GM12878 (cell line): ENCODE measurements at regions of chr7 and their contacts with region 1.

Region 1: DNA sequence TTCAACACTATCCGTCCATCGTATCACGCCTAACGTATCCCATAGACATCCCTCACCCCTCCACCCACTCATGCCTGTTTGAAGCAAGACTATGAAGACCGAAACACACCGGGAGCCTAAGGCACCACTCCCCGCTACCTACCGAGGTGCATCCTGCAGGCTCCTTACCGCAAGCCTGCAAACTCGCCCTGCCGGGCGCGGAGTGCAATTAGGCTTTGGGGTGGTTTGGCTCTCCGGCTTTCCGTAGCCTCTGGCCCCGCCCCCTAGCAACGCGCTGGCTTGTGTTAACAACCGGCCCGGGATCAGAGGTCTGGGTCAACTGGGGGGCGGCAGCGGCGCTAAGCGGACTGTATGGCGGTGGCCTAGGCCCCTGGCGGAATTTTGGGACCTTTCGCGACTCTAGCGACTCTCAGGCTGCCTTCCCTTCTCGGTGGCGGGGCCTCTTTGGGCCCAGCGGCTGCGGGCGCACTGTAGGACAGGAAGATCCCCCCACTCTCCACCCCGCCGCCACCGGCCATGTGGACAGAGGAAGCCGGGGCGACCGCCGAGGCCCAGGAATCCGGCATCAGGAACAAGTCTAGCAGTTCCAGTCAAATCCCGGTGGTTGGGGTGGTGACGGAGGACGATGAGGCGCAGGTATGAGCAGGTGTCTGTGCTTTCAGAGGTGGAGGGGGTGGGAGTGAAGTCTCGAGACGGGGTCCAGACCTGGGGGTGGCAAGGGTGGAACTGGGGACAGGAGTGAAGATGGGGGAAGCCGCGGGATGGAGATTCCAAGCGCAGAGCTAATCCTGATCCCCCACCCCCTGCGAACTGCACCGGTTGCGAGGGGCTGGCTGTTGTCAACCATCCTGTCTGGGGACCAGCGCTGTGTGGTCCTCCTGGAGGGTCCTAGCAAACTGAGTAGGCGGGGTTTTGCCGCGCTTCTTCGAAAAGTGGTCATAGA is at the start of gene CFAP69:
- DNase-seq: peak; percentile 46
- ATAC-seq: peak; percentile 69
- H3K4me3 ChIP-seq: peak within 1 kb of the TSS; percentile 66
- H3K27ac ChIP-seq: no peak within 1 kb of the TSS
- H3K4me1 ChIP-seq: peaks cover 5% of the 10 kb centered on the region; the same call in 1 of the 2 replicates
- H3K27me3 ChIP-seq: peaks cover 0 to 6% of the 10 kb centered on the region in 2 experiments; a peak in 1 of 4 replicates
- CTCF ChIP-seq: peak in 2 of 3 experiments; percentile 7 to 30; a peak in 1 of 6 replicates
- EP300 ChIP-seq: peak in 1 of 2 experiments; percentile 62; a peak in 2 of 4 replicates
- POLR2A ChIP-seq: peak; percentile 31; the same call in 1 of the 2 replicates
- RAD21 ChIP-seq: no peak
- polyA plus RNA-seq, gene CFAP69: 0.11 TPM in 1 of 2 experiments, not detected in the other

Region 2: DNA sequence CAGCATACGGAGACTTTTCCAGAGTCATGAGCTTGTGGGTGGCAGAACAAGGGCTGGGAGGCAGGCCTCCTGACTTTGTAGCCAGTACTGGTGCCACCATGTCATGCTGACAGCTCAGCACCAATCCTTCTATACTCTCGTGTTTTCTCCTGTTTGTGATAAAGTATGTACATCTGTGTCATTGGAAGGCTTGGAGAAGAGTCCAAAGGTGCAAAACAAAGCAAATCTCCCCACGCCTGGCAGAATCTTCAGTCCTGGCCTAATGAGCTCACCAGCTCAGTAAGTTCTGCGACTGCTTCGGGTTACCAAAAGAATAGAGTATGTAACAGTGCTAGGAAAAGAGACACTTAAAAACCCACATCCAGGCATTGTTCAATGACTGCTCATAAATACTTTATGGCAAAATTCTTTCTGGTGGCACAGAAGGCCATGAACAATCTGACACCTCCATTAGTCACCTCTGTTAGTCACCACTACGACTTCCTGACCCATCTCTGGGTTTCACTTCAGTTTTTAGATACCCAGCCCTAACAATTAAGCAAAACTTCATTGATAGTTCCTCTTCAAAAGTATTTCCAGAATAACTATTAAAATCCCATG is 66.4 kb before region 1 on chr7:
- CTCF ChIA-PET with region 1: interaction called, 9 read pairs
- POLR2A ChIA-PET with region 1: interaction called, 17 read pairs
- RAD21 ChIA-PET with region 1: interaction called, 10 read pairs
- SMC1A ChIA-PET with region 1: interaction called, 33 read pairs
- in situ Hi-C with region 1: loop called (anchors 5 kb)
- intact Hi-C with region 1: loop called (anchors 2 kb)
- DNase-seq: peak; percentile 65
- ATAC-seq: peak; percentile 95
- H3K4me3 ChIP-seq: no peak overlapping the region
- H3K27ac ChIP-seq: peak overlapping the region; percentile 19
- H3K4me1 ChIP-seq: peaks cover 23% of the 10 kb centered on the region
- H3K27me3 ChIP-seq: no peaks in the 10 kb centered on the region
- CTCF ChIP-seq: no peak
- EP300 ChIP-seq: peak in 1 of 2 experiments; percentile 80; a peak in 1 of 4 replicates
- POLR2A ChIP-seq: no peak
- RAD21 ChIP-seq: no peak

Region 3: GRCh38 chr7:90222811-90223725 is 22.1 kb before region 1 on chr7:
- CTCF ChIA-PET with region 1: interaction called, 24 read pairs
- POLR2A ChIA-PET with region 1: interaction called, 32 read pairs
- RAD21 ChIA-PET with region 1: interaction called, 38 read pairs
- SMC1A ChIA-PET with region 1: interaction called, 51 read pairs
- in situ Hi-C with region 1: no loop called
- intact Hi-C with region 1: no loop called
- DNase-seq: no peak
- ATAC-seq: peak; percentile 75
- H3K4me3 ChIP-seq: no peak overlapping the region
- H3K27ac ChIP-seq: no peak overlapping the region
- H3K4me1 ChIP-seq: no peaks in the 10 kb centered on the region
- H3K27me3 ChIP-seq: no peaks in the 10 kb centered on the region
- CTCF ChIP-seq: no peak
- EP300 ChIP-seq: no peak
- POLR2A ChIP-seq: no peak
- RAD21 ChIP-seq: no peak

Region 4: GRCh38 chr7:90256778-90257177 is 11.6 kb after region 1 on chr7:
- CTCF ChIA-PET with region 1: interaction called, 20 read pairs
- POLR2A ChIA-PET with region 1: interaction called, 9 read pairs
- RAD21 ChIA-PET with region 1: interaction called, 18 read pairs
- SMC1A ChIA-PET with region 1: interaction called, 22 read pairs
- in situ Hi-C with region 1: no loop called
- intact Hi-C with region 1: no loop called
- DNase-seq: no peak
- ATAC-seq: no peak
- H3K4me3 ChIP-seq: no peak overlapping the region
- H3K27ac ChIP-seq: no peak overlapping the region
- H3K4me1 ChIP-seq: no peaks in the 10 kb centered on the region
- H3K27me3 ChIP-seq: no peaks in the 10 kb centered on the region
- CTCF ChIP-seq: no peak
- EP300 ChIP-seq: no peak
- POLR2A ChIP-seq: no peak
- RAD21 ChIP-seq: no peak

Region 5: DNA sequence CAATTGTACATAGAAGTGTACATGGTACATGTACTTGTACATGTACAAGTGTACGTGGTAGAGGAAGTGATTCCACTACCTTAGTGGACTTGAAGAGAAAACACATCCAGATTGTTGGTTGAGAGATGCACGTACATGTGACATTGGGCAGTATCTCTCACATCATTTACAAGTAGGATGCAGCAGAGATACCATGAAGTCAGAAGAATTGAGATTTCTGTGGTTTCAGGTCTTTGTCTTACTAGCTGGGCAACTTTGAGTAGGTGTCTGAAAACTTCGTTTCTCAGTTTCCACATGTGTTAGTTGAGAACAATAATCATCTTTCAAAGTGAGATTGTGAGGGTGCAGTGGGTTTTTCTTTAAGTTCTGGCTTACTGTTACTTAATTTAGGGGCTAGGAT is 179.5 kb after region 1 on chr7:
- CTCF ChIA-PET with region 1: interaction called, 13 read pairs
- POLR2A ChIA-PET with region 1: no interaction called
- RAD21 ChIA-PET with region 1: interaction called, 6 read pairs
- SMC1A ChIA-PET with region 1: interaction called, 10 read pairs
- in situ Hi-C with region 1: no loop called
- intact Hi-C with region 1: no loop called
- DNase-seq: peak; percentile 53
- ATAC-seq: peak; percentile 94
- H3K4me3 ChIP-seq: no peak overlapping the region
- H3K27ac ChIP-seq: no peak overlapping the region
- H3K4me1 ChIP-seq: peaks cover 10% of the 10 kb centered on the region
- H3K27me3 ChIP-seq: no peaks in the 10 kb centered on the region
- CTCF ChIP-seq: no peak
- EP300 ChIP-seq: peak; percentile 67 to 86; a peak in 3 of 4 replicates
- POLR2A ChIP-seq: no peak
- RAD21 ChIP-seq: no peak

Region 6: DNA sequence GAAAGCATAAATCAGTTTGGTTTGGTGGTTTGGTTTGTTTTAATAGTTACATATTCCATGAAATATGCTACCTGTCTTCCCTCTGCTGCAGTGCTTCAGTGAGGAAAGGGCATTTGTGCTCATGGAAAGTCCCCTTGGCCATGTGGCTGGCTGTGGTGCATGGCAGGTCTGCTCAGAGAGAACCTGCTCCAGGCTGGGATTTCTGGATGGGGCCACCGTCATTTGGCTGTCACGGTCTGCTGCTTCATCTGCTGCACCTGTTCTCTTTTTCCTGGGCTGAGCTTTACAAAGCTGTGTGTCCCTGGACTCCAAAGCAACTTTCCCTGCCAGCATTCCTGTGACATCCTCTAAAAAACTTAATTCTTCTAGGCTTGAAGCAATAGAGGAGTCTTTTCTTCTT is 359.9 kb after region 1 on chr7:
- CTCF ChIA-PET with region 1: no interaction called
- POLR2A ChIA-PET with region 1: no interaction called
- RAD21 ChIA-PET with region 1: no interaction called
- SMC1A ChIA-PET with region 1: no interaction called
- in situ Hi-C with region 1: no loop called
- intact Hi-C with region 1: no loop called
- DNase-seq: no peak
- ATAC-seq: peak; percentile 68
- H3K4me3 ChIP-seq: no peak overlapping the region
- H3K27ac ChIP-seq: peak overlapping the region; percentile 56
- H3K4me1 ChIP-seq: peaks cover 19% of the 10 kb centered on the region
- H3K27me3 ChIP-seq: no peaks in the 10 kb centered on the region
- CTCF ChIP-seq: no peak
- EP300 ChIP-seq: no peak
- POLR2A ChIP-seq: no peak
- RAD21 ChIP-seq: no peak

Region 7: DNA sequence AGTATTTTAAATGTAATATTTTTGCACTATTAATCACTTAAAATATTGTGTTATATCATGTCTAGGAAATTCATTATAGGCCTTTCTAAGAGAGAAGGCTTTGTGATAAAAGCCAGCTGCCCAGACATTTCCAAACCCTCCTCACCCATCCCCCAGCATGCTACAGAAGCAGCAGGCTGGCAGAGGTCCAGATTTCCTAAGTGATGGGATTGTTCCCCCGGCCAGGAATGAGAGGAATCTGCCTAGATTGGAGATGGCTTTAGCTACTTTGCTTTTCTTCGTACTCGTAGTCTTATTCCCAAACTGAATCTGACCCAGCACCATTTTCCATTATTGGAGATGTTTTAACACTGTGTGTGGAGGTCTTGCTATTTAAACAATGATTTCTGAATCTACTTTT is 380.4 kb after region 1 on chr7:
- CTCF ChIA-PET with region 1: no interaction called
- POLR2A ChIA-PET with region 1: no interaction called
- RAD21 ChIA-PET with region 1: no interaction called
- SMC1A ChIA-PET with region 1: no interaction called
- in situ Hi-C with region 1: no loop called
- intact Hi-C with region 1: no loop called
- DNase-seq: no peak
- ATAC-seq: no peak
- H3K4me3 ChIP-seq: no peak overlapping the region
- H3K27ac ChIP-seq: no peak overlapping the region
- H3K4me1 ChIP-seq: no peaks in the 10 kb centered on the region
- H3K27me3 ChIP-seq: no peaks in the 10 kb centered on the region
- CTCF ChIP-seq: no peak
- EP300 ChIP-seq: no peak
- POLR2A ChIP-seq: no peak
- RAD21 ChIP-seq: no peak